PC-3 (cell line): ENCODE measurements at regions of chr1 and their contacts with region 1.

Region 1: DNA sequence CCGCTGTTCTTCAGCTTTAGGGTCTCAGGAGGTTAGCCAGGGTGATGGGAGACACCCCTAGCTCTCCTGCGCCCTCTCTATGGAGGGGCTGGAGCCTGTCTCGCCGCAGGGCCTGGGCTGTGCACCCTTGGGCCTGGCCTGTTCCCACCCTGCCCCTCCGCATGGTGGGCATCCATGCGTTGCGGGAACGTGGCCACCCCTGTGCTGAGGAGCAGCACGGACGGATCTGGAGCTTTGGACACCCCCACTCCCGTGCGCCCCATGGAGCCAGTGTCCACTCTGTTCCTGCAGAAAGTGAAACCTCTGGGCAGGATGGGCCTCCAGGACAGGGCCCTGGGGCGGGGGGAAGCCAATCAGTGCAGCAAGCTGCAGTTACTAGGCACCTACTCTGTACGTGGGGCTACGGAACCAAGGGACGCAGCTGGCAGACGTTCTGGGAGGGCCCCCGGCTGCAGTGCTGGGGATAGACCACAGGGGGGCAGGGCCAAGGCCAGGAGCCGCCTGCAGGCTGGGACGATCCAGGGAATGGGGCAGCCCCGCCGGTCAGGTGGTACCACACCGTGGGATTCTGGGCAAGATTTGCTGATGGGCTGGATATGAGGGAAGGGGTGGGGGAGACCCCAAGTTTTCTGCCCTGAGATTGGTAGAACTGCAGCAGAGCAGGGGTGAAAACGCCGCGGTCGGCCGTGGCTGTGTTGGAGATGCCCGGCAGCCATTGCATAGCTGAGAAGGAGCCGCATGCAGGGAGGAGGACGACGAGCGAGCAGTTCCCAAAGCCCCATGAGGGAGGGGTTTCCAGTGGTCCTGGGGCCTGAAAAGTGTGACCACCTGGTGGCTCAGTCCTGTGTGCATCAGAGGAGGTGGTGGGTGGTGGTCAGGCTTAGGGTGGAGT is 43.3 kb downstream of the TP73 start:
- DNase-seq: peak; percentile 71
- ATAC-seq: peak; percentile 94
- H3K4me3 ChIP-seq: peak overlapping the region; percentile 15; the same call in 1 of the 2 replicates
- H3K27ac ChIP-seq: no peak overlapping the region
- H3K4me1 ChIP-seq: no peaks in the 10 kb centered on the region
- H3K27me3 ChIP-seq: peaks cover 38% of the 10 kb centered on the region
- CTCF ChIP-seq: peak; percentile 93

Region 2: GRCh38 chr1:3727042-3727824 is 31.7 kb after region 1 on chr1:
- CTCF ChIA-PET with region 1: interaction called, 15 read pairs
- POLR2A ChIA-PET with region 1: no interaction called
- intact Hi-C with region 1: loop called (anchors 1 kb)
- DNase-seq: peak; percentile 48
- ATAC-seq: peak; percentile 25; the same call in 1 of the 2 replicates
- H3K4me3 ChIP-seq: no peak overlapping the region
- H3K27ac ChIP-seq: no peak overlapping the region
- H3K4me1 ChIP-seq: no peaks in the 10 kb centered on the region
- H3K27me3 ChIP-seq: peaks cover 6% of the 10 kb centered on the region; the same call in 1 of the 2 replicates
- CTCF ChIP-seq: peak; percentile 64

Region 3: DNA sequence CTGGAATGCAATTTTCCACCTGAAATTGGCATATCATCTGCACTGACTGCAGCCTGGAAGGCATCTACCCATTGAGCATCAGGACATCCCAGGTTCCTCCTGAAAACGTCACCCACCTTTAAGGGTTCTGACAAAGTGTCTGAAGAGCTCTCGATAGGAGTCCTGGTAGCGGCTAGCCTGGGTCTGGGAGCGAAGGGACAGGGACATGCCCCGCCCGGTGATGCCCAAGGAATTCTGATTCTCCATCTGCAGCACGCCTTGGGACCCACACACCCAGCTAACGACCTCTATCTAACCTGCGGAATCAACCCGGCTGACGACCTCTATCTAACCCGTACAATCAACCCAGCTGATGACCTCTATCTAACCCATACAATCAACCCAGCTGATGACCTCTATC is 43.4 kb after region 1 on chr1:
- CTCF ChIA-PET with region 1: no interaction called
- POLR2A ChIA-PET with region 1: no interaction called
- intact Hi-C with region 1: no loop called
- DNase-seq: no peak
- ATAC-seq: no peak
- H3K4me3 ChIP-seq: no peak overlapping the region
- H3K27ac ChIP-seq: no peak overlapping the region
- H3K4me1 ChIP-seq: no peaks in the 10 kb centered on the region
- H3K27me3 ChIP-seq: no peaks in the 10 kb centered on the region
- CTCF ChIP-seq: no peak